ENCODE measurements at regions of chr6 and their contacts with region 1.

Region 1: DNA sequence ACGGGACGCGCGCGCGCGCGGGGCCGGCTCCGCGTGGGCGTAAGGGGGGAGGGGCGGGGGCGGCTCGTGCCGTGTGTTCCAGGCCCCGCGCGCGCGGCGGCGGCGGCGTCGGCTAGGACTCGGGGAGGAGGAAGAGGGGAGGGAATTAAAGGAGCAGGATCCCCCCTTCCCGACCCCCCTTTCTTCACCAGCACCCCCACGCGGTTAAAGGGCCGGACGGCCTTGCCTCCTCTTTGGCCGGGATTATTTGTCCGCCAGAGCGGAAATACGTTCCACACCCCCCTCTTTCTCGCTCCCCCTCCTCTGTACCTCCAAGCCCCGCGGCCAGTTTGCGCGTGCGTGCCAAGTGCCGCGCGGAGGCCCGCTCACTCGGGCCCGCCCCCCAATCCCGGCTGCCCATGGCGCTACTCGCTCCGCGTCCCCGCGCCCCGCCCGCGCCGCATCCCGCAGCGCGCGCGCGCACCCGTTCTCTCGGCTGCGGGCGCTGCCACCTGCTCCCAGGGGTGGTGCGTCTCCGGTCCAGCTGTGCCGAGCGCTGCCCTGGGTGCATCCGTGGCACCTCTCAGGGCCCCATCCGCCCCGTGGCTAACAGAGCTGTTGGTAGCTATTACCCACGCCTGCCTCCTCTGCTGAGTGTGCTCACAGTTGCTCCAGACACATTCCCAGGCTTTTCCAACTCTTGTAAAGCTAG is at the start of gene ZBTB12:
- DNase-seq: peak; percentile 63 to 94
- H3K4me3 ChIP-seq: peak within 1 kb of the TSS; percentile 79 to 88
- H3K27ac ChIP-seq: peak within 1 kb of the TSS; percentile 77
- H3K4me1 ChIP-seq: peaks cover 6 to 7% of the 10 kb centered on the region in 2 donors
- H3K27me3 ChIP-seq: no peaks in the 10 kb centered on the region
- CTCF ChIP-seq: no peak
- total RNA-seq, gene ZBTB12: 7.3 TPM

Region 2: DNA sequence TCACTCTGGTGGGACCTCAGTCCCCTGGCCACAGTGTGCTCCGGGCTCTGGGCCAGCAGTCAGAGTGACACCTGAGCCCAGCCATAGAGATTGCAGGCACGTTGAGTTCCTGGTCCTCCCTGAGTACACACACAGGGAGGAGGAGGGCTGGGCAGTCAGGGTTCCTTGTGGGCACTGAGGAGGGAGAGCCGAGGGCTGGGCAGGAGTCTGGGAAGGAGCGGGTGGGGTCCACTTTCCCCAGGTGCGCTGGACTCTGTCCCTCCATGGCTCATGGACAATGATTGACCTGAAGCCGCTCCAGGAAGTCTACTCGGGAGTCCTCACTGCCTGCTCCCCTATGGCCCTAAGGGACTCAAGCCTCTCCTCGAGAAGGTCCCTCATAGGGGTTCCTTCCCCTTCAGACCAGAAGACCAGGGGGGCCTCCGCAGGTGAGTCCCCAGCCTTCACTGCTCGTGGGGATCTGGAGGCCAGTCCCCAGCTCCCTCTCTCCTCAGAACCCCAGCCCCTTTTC is 24.4 kb before region 1 on chr6:
- intact Hi-C with region 1: no loop called
- DNase-seq: no peak
- H3K4me3 ChIP-seq: no peak overlapping the region
- H3K27ac ChIP-seq: no peak overlapping the region
- H3K4me1 ChIP-seq: no peaks in the 10 kb centered on the region
- H3K27me3 ChIP-seq: no peaks in the 10 kb centered on the region
- CTCF ChIP-seq: no peak

Region 3: DNA sequence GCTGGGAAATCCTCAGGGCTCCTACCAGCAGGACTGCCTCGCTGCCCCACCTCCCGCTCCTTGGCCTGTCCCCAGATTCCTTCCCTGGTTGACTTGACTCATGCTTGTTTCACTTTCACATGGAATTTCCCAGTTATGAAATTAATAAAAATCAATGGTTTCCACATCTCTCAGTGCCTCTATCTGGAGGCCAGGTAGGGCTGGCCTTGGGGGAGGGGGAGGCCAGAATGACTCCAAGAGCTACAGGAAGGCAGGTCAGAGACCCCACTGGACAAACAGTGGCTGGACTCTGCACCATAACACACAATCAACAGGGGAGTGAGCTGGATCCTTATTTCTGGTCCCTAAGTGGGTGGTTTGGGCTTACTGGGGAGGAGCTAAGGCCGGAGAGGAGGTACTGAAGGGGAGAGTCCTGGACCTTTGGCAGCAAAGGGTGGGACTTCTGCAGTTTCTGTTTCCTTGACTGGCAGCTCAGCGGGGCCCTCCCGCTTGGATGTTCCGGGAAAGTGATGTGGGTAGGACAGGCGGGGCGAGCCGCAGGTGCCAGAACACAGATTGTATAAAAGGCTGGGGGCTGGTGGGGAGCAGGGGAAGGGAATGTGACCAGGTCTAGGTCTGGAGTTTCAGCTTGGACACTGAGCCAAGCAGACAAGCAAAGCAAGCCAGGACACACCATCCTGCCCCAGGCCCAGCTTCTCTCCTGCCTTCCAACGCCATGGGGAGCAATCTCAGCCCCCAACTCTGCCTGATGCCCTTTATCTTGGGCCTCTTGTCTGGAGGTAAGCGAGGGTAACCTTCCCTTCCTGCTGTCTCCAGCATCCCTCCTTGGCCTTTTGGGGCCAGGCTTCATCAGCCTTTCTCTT is 43.6 kb after region 1 on chr6 and contains the start of gene CFB:
- intact Hi-C with region 1: loop called (anchors 2 kb)
- DNase-seq: peak; percentile 75 to 94
- H3K4me3 ChIP-seq: peak within 1 kb of the TSS; percentile 28 to 59
- H3K27ac ChIP-seq: peak within 1 kb of the TSS; percentile 91 to 93
- H3K4me1 ChIP-seq: peaks cover 3 to 16% of the 10 kb centered on the region in 2 donors
- H3K27me3 ChIP-seq: no peaks in the 10 kb centered on the region
- CTCF ChIP-seq: no peak
- total RNA-seq, gene CFB: 132 TPM

Region 4: DNA sequence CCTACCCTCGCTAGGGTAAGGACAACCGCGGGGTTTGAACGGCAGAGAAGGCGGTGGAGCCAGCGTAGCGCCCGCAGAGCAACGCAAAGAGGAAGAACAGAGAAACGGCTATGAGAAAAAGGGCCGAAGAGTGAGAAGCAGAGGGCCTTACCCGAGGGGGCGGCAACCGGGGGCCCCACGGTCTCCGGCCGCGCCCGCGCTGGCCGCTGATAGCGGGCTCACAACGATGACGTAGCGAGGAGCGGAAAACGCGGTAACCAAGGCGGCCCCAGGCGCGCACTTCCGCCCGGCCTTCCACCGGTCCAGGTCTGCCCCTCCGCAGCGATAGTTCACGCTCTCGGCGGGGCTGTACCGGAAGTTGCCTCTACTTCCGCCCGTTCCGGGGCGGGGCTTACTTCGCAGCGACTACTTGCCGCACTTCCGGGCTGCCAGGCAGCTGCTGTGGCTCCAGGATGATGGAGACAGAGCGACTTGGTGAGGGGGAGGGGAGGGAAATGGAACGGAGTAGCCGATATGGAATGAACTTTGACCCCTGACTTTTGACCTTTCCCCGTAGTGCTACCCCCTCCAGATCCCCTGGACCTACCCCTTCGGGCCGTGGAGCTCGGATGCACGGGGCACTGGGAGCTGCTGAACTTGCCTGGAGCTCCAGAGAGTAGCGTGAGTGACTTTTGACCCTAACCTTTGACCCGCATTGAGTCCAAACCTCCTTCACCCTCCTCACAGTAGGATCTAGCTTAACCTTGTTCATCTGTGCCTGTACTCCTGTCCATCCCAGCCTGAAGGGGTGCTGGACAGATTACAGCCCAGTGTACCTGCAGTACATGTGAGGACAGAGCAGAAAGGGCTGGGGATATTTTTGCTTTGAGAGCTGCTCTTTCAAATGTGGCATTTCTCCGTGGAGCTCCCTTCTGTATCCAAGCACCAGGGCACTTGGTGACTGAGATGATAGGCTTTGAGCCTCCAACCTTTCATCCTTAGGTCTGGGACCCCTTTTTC is 56.9 kb after region 1 on chr6 and contains the starts of genes NELFE and SKIC2:
- intact Hi-C with region 1: loop called (anchors 1 kb)
- DNase-seq: peak; percentile 92 to 99
- H3K4me3 ChIP-seq: peak within 1 kb of the TSS; percentile 78 to 96
- H3K27ac ChIP-seq: peak within 1 kb of the TSS; percentile 85 to 88
- H3K4me1 ChIP-seq: peaks cover 3 to 23% of the 10 kb centered on the region in 2 donors
- H3K27me3 ChIP-seq: no peaks in the 10 kb centered on the region
- CTCF ChIP-seq: no peak
- total RNA-seq, gene NELFE: 208 TPM
- total RNA-seq, gene SKIC2: 77.4 TPM

Region 5: DNA sequence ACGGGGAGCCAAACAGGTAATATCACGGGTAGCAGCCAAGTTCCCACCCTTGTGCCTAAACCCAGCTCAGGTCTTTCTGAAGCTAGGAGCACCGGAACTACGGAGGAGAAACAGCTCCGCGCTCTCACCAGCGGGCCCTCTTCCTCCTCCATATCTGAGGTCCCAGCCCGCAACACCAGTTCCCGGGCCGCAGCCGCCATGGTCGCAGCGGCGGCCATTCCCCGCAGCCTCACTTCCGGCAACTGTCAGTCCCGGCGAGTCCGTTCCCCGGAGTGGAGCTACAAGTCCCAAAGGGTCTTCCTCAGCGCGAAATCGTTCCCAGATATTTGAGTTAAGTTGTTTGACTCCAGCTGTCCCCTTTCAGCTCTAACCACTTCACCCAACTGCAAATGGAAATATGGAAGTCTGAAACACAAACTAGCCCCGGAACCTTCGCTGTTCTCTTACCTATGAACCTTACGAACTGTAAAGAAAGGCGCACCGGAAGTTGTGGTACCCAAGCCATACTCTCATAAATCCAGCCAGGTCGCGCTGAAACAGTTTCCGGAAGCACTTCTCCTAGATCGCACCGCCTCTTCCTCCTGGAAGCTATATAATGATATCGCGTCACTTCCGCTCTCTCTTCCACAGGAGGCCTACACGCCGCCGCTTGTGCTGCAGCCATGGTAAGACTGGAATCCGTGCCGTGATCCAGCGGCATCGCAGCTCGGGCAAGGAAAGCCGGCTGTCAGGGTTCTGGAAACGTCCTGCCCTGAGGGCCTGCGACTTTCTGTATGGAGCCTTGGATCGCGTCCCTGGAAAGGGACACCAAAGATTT is 1369.6 kb after region 1 on chr6 and contains the starts of genes RPS18 and VPS52:
- intact Hi-C with region 1: loop called (anchors 5 kb)
- DNase-seq: peak; percentile 81 to 98
- H3K4me3 ChIP-seq: peak within 1 kb of the TSS; percentile 71 to 94
- H3K27ac ChIP-seq: peak within 1 kb of the TSS; percentile 91 to 96
- H3K4me1 ChIP-seq: peaks cover 9 to 42% of the 10 kb centered on the region in 2 donors
- H3K27me3 ChIP-seq: no peaks in the 10 kb centered on the region
- CTCF ChIP-seq: no peak
- total RNA-seq, gene RPS18: 1,863 TPM
- total RNA-seq, gene VPS52: 50.1 TPM

Measured in ascending aorta (tissue), 2 donors.